ENCODE measurements at regions of chr21 and their contacts with region 1.

Region 1: GRCh38 chr21:25607151-25608043 is at the start of gene MRPL39:
- DNase-seq: peak; percentile 80
- ATAC-seq: peak; percentile 93
- H3K4me3 ChIP-seq: peak within 1 kb of the TSS; percentile 91 to 93
- H3K27ac ChIP-seq: peak within 1 kb of the TSS; percentile 72
- H3K4me1 ChIP-seq: peaks cover 7 to 15% of the 10 kb centered on the region in 2 experiments; a peak in 3 of 4 replicates
- H3K27me3 ChIP-seq: no peaks in the 10 kb centered on the region
- CTCF ChIP-seq: peak; percentile 6 to 71 (median 61); a peak in 4 of 6 replicates
- POLR2A ChIP-seq: peak; percentile 70
- RAD21 ChIP-seq: no peak; the same call in 1 of the 2 replicates
- total RNA-seq, gene MRPL39: 41.1 TPM

Region 2: GRCh38 chr21:25734904-25735645 is 127.7 kb after region 1 on chr21 and contains the starts of genes ATP5PF and GABPA:
- CTCF ChIA-PET with region 1: interaction called, 3 read pairs
- POLR2A ChIA-PET with region 1: no interaction called
- RAD21 ChIA-PET with region 1: no interaction called
- intact Hi-C with region 1: loop called (anchors 1 kb)
- DNase-seq: peak; percentile 97
- ATAC-seq: peak; percentile 90
- H3K4me3 ChIP-seq: peak within 1 kb of the TSS; percentile 82 to 96
- H3K27ac ChIP-seq: peak within 1 kb of the TSS; percentile 91
- H3K4me1 ChIP-seq: peaks cover 11 to 18% of the 10 kb centered on the region in 2 experiments
- H3K27me3 ChIP-seq: no peaks in the 10 kb centered on the region
- CTCF ChIP-seq: no peak
- POLR2A ChIP-seq: peak; percentile 43
- RAD21 ChIP-seq: no peak
- total RNA-seq, gene ATP5PF: 132 TPM
- total RNA-seq, gene GABPA: 23.6 TPM

Region 3: DNA sequence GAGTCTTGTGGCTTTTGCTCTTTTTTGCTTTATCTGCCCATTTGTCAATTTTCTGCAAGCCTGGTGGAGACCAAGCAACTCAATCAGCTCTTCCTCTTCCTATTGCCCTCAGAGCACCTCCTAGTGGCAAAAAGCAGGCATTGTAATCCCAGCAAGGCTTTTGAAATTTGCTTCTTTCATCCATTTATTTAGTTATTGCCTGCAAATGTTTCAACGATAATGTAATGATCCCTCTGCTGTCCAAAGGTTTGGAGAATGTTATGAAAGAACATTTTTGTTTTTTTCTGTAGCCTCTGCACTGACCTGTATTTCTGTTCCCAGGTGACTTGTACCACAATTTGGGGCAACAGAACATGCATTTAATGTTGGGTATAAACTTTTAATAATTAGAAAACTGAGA is 255.2 kb after region 1 on chr21:
- CTCF ChIA-PET with region 1: no interaction called
- POLR2A ChIA-PET with region 1: no interaction called
- RAD21 ChIA-PET with region 1: no interaction called
- intact Hi-C with region 1: loop called (anchors 1 kb)
- DNase-seq: peak; percentile 18
- ATAC-seq: peak; percentile 55; the same call in 1 of the 2 replicates
- H3K4me3 ChIP-seq: no peak overlapping the region
- H3K27ac ChIP-seq: no peak overlapping the region
- H3K4me1 ChIP-seq: no peaks in the 10 kb centered on the region
- H3K27me3 ChIP-seq: 0 out of 2 replicates have a peak, but pooled peaks cover 3% of the 10 kb centered on the region
- CTCF ChIP-seq: peak; percentile 15 to 83 (median 82); a peak in 5 of 6 replicates
- POLR2A ChIP-seq: no peak
- RAD21 ChIP-seq: peak; percentile 25; the same call in 1 of the 2 replicates

Region 4: DNA sequence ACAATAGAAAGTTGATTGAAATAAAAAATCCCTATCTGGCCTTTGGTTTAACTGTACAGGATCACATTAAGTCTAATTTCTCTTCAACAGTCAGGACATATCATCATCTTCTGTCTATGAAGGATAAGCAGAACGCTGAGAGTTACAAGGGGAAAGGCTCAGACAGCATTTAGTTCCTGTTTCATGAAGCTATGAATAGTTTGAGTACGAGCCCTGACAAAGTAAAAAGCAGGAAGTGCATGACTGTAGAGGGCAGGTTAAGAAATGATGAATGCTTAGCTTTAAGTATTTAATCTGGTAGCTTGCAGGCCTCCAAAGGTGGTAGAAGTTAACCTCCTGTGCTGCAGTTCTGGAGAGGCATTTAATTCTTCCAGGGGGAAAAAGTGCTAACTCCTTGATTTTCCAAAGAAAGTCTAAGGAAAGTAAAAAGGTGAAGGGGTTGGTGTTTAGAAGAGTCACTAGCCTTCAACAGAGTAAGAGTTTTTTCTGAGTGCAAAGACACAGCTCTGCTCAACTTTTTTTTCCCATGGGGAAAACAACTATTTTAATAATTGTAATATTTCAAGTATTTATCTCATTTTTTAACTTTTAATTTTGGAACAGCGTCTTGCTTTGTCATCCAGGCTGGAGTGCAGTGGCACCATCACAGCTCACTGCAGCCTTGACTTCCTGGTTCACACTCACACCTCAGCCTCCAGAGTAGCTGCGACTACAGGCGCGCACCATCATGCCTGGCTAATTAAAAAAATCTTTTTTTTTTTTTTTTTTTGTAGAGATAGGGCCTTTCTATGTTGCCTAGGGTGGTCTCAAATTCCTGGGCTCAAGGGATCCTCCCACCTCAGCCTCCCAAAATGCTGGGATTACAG is 360.4 kb after region 1 on chr21:
- CTCF ChIA-PET with region 1: no interaction called
- POLR2A ChIA-PET with region 1: no interaction called
- RAD21 ChIA-PET with region 1: no interaction called
- intact Hi-C with region 1: loop called (anchors 10 kb)
- DNase-seq: no peak
- ATAC-seq: no peak
- H3K4me3 ChIP-seq: no peak overlapping the region
- H3K27ac ChIP-seq: no peak overlapping the region
- H3K4me1 ChIP-seq: peaks cover 16 to 35% of the 10 kb centered on the region in 2 experiments
- H3K27me3 ChIP-seq: no peaks in the 10 kb centered on the region
- CTCF ChIP-seq: no peak
- POLR2A ChIP-seq: no peak
- RAD21 ChIP-seq: no peak

Region 5: GRCh38 chr21:26715878-26716506 is 1108.6 kb after region 1 on chr21:
- CTCF ChIA-PET with region 1: interaction called, 4 read pairs
- POLR2A ChIA-PET with region 1: no interaction called
- RAD21 ChIA-PET with region 1: no interaction called
- intact Hi-C with region 1: loop called (anchors 2 kb)
- DNase-seq: no peak
- ATAC-seq: peak; percentile 63
- H3K4me3 ChIP-seq: no peak overlapping the region
- H3K27ac ChIP-seq: no peak overlapping the region
- H3K4me1 ChIP-seq: no peaks in the 10 kb centered on the region
- H3K27me3 ChIP-seq: no peaks in the 10 kb centered on the region
- CTCF ChIP-seq: peak in 2 of 3 experiments; percentile 63 to 64; a peak in 4 of 6 replicates
- POLR2A ChIP-seq: no peak
- RAD21 ChIP-seq: 0 out of 2 replicates have a peak, but pooled peaks have one; percentile 16